HepG2 (cell line): ENCODE measurements at regions of chr18 and their contacts with region 1.

Region 1: DNA sequence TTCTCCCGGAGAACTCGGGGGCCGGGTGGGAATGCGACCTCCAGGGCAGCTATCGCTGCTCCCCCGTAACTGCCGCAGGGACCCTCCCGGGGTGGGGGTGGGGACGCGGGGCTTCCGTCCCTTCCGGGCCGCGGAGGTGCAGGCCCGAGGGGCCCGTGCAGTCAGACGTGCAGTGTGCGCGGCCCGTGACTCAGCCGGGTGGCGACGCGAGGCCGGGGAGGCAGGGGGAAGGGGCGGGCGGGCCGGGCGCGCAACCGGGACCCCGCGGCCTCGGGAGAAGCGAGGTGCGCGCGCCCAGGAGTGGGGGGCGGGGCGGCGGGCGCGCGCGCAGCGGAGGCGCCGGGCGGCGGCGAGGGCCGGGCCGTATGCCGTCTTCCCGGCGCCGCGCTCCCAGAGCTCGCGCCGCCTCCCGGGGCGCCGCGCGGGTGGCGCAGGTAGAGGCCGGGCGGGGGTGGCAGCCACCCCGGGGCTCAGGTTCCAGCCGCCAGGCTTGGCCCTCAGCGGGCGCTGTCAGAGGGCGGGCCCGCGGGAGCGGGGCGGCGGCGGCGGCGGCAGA is 25.0 kb upstream of the SMAD7 start:
- DNase-seq: no peak
- ATAC-seq: peak; percentile 51
- H3K4me3 ChIP-seq: peak overlapping the region; percentile 68 to 77 (median 74)
- H3K27ac ChIP-seq: no peak overlapping the region
- H3K4me1 ChIP-seq: peaks cover 41% of the 10 kb centered on the region
- H3K27me3 ChIP-seq: peaks cover 2 to 18% of the 10 kb centered on the region in 2 experiments
- CTCF ChIP-seq: no peak
- EP300 ChIP-seq: no peak
- POLR2A ChIP-seq: no peak
- RAD21 ChIP-seq: no peak; the same call in none of the 2 replicates

Region 2: DNA sequence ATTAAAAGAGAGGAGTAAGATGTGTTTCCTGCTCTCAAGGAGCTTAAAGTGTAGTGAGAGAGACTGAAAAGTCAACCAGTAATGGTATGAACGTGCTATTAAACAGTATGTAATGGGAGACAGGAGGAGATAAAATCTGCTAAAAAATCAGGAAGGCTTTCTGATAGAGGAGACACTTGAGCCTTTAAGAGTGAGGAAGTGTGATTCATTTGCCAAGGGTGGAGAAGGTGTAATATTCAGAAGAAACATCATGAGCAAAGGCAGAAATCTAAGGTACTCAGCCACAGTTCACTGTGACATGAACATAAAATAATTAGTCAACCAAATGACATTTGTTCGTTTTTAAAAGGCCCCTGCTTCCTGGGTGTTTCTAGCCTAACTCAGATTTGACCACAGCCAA is 1586.5 kb before region 1 on chr18:
- CTCF ChIA-PET with region 1: no interaction called
- POLR2A ChIA-PET with region 1: no interaction called
- in situ Hi-C with region 1: no loop called
- intact Hi-C with region 1: no loop called
- DNase-seq: no peak
- ATAC-seq: no peak
- H3K4me3 ChIP-seq: no peak overlapping the region
- H3K27ac ChIP-seq: no peak overlapping the region
- H3K4me1 ChIP-seq: no peaks in the 10 kb centered on the region
- H3K27me3 ChIP-seq: no peaks in the 10 kb centered on the region; a peak in 1 of 5 replicates
- CTCF ChIP-seq: no peak
- EP300 ChIP-seq: no peak
- POLR2A ChIP-seq: no peak
- RAD21 ChIP-seq: no peak

Region 3: DNA sequence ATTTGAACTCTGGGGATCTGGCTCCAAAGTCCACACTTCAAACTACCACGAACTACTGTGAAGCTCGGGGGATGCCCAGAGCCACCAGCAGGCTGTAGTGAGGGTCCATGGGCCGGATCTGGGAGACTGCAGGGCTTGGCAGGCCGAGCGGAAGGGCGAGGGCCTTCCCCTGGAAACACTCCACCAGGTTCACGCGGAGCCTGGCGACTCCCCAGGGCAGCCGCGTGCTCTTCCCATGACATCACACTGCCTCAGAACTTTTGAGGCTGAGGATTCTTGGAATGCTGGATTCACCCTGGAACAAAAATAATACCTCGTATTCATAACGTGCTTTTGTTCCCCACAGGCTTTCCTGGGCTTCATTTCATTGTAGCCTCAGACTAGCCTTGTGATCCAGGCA is 226.0 kb before region 1 on chr18:
- CTCF ChIA-PET with region 1: no interaction called
- POLR2A ChIA-PET with region 1: no interaction called
- in situ Hi-C with region 1: no loop called
- intact Hi-C with region 1: no loop called
- DNase-seq: no peak
- ATAC-seq: no peak
- H3K4me3 ChIP-seq: no peak overlapping the region
- H3K27ac ChIP-seq: no peak overlapping the region
- H3K4me1 ChIP-seq: no peaks in the 10 kb centered on the region
- H3K27me3 ChIP-seq: no peaks in the 10 kb centered on the region
- CTCF ChIP-seq: no peak
- EP300 ChIP-seq: no peak
- POLR2A ChIP-seq: no peak
- RAD21 ChIP-seq: no peak

Region 4: DNA sequence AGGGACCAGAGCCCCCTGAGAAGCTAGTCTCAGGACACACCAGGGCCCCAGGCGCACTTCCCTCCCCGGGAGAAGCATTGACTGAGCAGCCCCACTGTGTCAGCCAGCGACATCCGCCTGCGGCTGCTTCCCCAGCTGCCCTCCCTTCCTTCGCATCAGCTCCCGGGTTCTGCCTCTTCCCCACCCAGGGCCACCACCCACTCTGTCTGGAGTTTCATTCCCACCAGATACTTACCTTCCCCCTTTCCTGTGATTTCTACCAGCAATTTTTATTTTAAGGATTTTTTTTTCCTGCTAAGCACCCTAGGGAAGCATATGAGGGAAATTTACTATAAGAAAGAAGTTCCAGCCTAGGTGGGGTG is 124.1 kb before region 1 on chr18:
- CTCF ChIA-PET with region 1: no interaction called
- POLR2A ChIA-PET with region 1: no interaction called
- in situ Hi-C with region 1: no loop called
- intact Hi-C with region 1: no loop called
- DNase-seq: no peak
- ATAC-seq: no peak
- H3K4me3 ChIP-seq: no peak overlapping the region
- H3K27ac ChIP-seq: no peak overlapping the region
- H3K4me1 ChIP-seq: no peaks in the 10 kb centered on the region
- H3K27me3 ChIP-seq: no peaks in the 10 kb centered on the region
- CTCF ChIP-seq: no peak
- EP300 ChIP-seq: no peak
- POLR2A ChIP-seq: no peak
- RAD21 ChIP-seq: no peak

Region 5: DNA sequence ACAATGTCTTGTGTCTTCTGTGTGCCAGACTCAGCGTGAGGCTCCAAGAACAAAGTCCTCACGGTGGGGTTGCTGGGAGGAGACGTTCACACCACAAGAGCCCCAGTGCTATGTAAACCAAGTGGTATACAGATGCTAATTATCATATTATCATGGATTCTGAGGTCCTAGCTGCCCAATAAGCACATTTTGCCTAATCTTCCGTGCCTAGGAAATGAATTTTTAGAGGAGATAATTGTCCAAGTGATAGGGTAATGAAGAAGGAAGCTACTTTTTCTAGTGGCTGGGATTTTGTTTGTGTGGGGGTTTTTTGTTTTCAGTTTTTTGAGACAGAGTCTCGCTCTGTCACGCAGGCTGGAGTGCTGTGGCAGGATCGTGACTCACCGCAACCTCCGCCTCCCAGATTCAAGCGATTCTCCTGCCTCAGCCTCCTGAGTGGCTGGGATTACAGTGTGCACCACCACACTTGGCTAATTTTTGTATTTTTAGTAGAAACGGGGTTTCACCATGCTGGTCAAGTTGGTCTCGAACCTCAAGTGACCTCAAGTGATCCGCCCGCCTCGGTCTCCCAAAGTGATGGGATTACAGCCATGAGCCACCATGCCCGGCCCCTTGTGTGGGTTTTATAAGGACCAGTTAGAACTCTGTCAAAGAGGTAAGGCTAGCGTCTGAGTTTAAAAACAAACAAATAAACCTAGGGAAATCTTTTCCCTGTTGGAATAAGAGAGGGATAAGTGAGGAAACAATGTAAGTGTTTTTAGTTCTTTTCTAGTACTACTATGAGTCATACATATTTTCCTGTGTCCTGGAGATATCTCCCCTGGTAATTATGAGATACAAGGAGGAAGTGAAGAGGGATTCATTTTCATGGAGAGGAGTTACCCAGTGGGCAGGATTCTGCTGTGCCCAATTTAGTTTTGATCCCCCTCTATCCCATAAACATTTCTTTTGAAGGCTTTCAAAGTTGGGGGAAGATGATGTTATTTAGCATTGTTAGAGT is 15.5 kb before region 1 on chr18:
- CTCF ChIA-PET with region 1: no interaction called
- POLR2A ChIA-PET with region 1: interaction called, 8 read pairs
- in situ Hi-C with region 1: no loop called
- intact Hi-C with region 1: loop called (anchors 2 kb)
- DNase-seq: no peak
- ATAC-seq: no peak
- H3K4me3 ChIP-seq: no peak overlapping the region
- H3K27ac ChIP-seq: no peak overlapping the region
- H3K4me1 ChIP-seq: peaks cover 56% of the 10 kb centered on the region
- H3K27me3 ChIP-seq: peaks cover 0 to 16% of the 10 kb centered on the region in 2 experiments; a peak in 4 of 5 replicates
- CTCF ChIP-seq: no peak
- EP300 ChIP-seq: no peak
- POLR2A ChIP-seq: no peak
- RAD21 ChIP-seq: no peak

Region 6: DNA sequence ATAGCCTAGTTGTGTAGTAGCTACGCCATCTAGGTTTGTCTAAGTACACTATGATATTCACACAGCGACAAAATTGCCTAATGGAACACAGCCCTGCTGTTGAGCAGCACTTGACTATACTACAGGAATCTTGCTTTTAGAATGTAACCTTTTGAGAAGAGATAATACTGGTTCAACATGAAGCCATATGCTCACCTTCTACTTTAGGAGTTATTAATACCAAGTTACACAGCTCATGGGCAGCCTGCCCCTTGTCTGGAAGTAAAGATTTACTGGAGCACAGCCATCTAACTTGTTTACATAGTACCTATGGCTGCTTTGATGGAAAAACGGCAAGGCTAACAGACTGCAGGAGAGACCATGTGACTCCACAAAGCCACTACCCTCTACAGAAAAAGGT is 309.9 kb after region 1 on chr18:
- CTCF ChIA-PET with region 1: no interaction called
- POLR2A ChIA-PET with region 1: no interaction called
- in situ Hi-C with region 1: no loop called
- intact Hi-C with region 1: no loop called
- DNase-seq: no peak
- ATAC-seq: no peak
- H3K4me3 ChIP-seq: no peak overlapping the region
- H3K27ac ChIP-seq: no peak overlapping the region
- H3K4me1 ChIP-seq: peaks cover 18% of the 10 kb centered on the region; the same call in 1 of the 2 replicates
- H3K27me3 ChIP-seq: no peaks in the 10 kb centered on the region
- CTCF ChIP-seq: no peak
- EP300 ChIP-seq: no peak
- POLR2A ChIP-seq: no peak
- RAD21 ChIP-seq: no peak